ENCODE measurements at regions of chr12 and their contacts with region 1.

Region 1: DNA sequence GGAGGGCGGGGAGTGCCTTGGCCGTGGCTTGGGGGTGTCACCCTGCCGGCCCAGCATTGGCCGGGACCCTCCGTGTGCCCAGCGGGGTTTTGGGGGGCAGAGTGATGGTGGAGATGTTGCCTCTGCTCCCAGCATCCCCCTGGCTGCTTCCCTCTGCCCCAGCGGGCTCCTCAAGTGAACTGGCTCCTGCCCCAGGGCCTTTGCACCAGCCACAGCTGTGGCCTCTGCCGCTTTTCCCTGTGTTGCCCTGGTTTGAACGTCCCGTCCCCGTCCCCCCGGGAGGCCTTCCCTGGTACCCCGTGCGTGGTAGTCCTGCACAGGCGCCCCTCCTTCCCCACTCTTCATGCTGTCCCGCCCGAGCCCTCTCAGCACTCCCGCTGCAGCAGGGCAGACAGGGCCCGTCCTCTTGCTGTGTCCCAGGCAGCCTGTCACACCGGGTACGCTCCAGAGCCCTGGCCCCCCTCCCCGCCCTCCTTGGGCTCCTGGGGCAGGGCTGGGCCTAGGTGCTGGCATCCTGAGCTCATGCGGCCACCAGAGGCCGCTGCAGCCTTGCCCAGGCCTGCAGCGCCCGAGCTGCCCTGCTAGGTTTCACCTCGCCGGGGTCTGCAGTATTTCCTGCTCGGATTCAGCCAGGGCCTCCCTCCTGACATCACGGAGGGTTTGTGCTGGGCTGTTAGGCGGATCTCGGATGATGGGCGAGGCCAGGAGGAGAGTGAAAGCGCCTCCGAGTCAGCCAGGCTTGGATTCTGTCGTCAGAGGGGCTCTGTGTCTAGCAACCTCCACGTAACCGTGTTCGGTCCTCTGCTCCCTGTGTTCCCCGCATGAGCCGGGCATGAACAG is 9.5 kb downstream of the NOC4L start:
- H3K4me3 ChIP-seq: no peak overlapping the region
- H3K27ac ChIP-seq: no peak overlapping the region
- H3K4me1 ChIP-seq: no peaks in the 10 kb centered on the region
- CTCF ChIP-seq: peak; percentile 94

Region 2: DNA sequence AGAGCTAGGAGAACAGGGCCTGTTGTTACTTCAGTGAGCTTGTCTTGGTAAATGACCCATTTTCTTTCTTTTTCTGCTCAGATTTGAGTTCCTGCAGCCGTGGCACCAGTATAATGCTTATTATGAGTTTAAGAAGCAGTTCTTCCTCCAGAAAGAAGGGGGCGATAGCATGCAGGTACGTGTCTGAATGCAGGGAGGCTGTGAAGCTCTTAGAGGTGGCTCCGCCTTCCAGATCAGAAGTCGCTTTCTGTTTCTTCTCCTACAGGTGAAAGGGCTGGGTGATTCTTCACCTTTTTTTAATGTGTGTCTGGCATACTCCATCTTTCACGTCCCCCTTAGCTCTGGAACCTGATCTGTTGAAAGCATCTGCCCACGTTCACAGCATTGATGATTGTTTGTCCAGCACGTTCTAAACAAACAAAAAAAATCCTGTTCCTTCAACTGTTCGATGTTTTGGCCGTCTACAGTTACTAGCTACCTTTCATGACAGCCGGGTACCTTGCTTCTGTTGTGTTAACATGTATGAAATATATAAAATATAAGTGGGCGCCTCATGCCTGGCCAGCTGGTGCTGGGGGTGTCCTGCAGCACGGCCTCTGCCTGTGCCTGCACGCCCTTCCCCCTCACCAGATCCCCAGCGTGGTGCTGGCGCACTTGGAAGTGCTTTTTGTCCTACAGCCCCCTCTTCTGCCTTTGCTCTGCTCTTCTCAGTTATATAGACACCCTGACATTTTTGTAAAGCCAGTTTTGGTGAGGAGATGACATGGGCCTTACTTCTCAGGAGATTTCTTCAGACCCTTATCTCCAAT is 398.2 kb before region 1 on chr12:
- CTCF ChIA-PET with region 1: no interaction called
- POLR2A ChIA-PET with region 1: no interaction called
- H3K4me3 ChIP-seq: no peak overlapping the region
- H3K27ac ChIP-seq: no peak overlapping the region
- H3K4me1 ChIP-seq: no peaks in the 10 kb centered on the region
- CTCF ChIP-seq: no peak

Region 3: DNA sequence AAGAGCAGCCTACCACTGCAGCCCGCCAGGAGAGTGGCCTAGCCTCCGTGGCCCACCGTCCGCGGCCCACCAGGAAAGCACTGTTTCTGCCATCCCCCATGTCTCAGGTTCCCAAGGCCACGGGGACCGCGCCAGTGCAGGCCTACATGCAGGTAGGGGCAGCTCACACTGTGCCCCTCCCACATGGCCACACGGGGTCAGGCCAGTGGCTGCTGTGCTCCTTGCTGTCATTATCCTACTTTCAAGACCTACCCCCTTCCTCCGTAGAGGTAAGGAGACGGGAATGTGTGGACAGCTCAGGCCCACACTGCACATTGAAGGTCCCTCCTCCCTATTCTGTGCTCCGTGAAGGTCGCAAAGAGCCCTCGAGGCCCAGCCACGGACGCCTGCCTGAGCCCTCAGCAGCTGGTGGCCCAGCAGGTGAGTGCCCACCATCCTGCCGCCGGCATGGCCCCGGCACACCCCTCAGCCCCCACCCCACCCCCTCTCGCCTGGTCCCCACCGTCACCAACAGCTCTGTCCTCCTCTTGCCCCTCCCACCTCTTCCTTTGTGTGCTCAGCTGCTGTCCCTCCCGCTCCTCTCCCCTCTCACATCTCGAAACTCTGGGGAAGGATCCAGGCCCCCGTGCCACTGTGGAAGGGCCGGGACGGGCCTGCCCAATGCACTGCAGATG is 19.6 kb before region 1 on chr12:
- CTCF ChIA-PET with region 1: no interaction called
- POLR2A ChIA-PET with region 1: no interaction called
- H3K4me3 ChIP-seq: no peak overlapping the region
- H3K27ac ChIP-seq: no peak overlapping the region
- H3K4me1 ChIP-seq: no peaks in the 10 kb centered on the region
- CTCF ChIP-seq: peak; percentile 22; the same call in 1 of the 2 replicates

Region 4: GRCh38 chr12:132218915-132219314 is 65.2 kb after region 1 on chr12:
- CTCF ChIA-PET with region 1: interaction called, 16 read pairs
- POLR2A ChIA-PET with region 1: interaction called, 9 read pairs
- H3K4me3 ChIP-seq: no peak overlapping the region
- H3K27ac ChIP-seq: no peak overlapping the region
- H3K4me1 ChIP-seq: no peaks in the 10 kb centered on the region
- CTCF ChIP-seq: peak; percentile 34; the same call in 1 of the 2 replicates